ENCODE measurements at regions of chr12 and their contacts with region 1.

Region 1: GRCh38 chr12:20142956-20143355 is 225.4 kb upstream of the PDE3A start:
- DNase-seq: no peak
- ATAC-seq: peak; percentile 75
- H3K4me3 ChIP-seq: no peak overlapping the region
- H3K27ac ChIP-seq: no peak overlapping the region
- H3K4me1 ChIP-seq: 0 out of 2 replicates have a peak, but pooled peaks cover 2% of the 10 kb centered on the region
- H3K27me3 ChIP-seq: no peaks in the 10 kb centered on the region
- CTCF ChIP-seq: no peak; a peak in 1 of 6 replicates
- EP300 ChIP-seq: no peak
- POLR2A ChIP-seq: no peak
- RAD21 ChIP-seq: 0 out of 2 replicates have a peak, but pooled peaks have one; percentile 28

Region 2: GRCh38 chr12:20097626-20098025 is 45.3 kb before region 1 on chr12:
- CTCF ChIA-PET with region 1: interaction called, 3 read pairs
- POLR2A ChIA-PET with region 1: no interaction called
- RAD21 ChIA-PET with region 1: interaction called, 4 read pairs
- SMC1A ChIA-PET with region 1: interaction called, 3 read pairs
- in situ Hi-C with region 1: no loop called
- intact Hi-C with region 1: loop called (anchors 2 kb)
- DNase-seq: peak; percentile 28
- ATAC-seq: peak; percentile 81
- H3K4me3 ChIP-seq: no peak overlapping the region
- H3K27ac ChIP-seq: no peak overlapping the region
- H3K4me1 ChIP-seq: no peaks in the 10 kb centered on the region
- H3K27me3 ChIP-seq: no peaks in the 10 kb centered on the region
- CTCF ChIP-seq: no peak
- EP300 ChIP-seq: peak; percentile 84 to 91; a peak in 3 of 4 replicates
- POLR2A ChIP-seq: no peak
- RAD21 ChIP-seq: no peak

Region 3: DNA sequence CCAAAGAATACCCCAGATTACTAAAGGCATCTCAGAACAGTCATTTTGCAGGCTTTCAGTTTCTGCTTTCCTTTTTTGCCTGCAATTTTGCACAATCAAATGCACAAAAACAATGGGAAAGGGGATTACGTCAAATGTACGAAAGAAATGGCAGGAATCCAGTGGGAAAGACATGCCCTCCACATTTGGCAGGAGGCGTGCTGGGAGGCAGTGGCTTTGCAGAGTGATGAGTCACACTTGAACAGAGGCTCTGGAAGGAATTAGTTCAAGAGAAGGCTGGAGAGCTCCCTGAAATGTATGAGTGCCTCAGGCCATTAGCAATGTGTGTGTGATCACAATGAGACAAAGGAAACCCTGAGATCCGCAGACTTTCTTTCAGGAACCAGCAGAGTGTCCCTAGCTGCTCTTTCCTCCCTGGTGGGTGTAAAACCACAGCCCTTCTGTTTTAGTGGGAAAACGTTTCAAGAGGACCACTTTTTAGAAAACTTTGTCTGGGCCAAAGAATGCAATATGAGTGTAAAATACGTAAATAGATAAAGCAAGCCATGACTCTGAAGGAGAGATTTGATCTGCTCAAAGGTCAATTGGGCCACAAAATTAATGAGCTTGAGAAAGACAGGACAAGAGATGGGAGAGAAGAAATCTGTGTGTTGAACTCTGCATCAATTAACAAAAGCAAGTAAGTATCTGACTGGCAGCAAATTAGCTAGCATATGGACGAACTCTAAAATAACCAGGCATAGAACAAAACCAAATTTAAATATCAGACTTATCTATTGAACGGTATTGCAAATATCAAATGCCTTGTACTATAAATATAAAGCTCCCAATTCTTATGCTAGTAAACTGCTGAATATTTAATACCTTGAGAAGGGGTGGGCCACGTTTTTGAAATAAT is 70.0 kb after region 1 on chr12:
- CTCF ChIA-PET with region 1: no interaction called
- POLR2A ChIA-PET with region 1: no interaction called
- RAD21 ChIA-PET with region 1: no interaction called
- SMC1A ChIA-PET with region 1: interaction called, 6 read pairs
- in situ Hi-C with region 1: no loop called
- intact Hi-C with region 1: loop called (anchors 5 kb)
- DNase-seq: no peak
- ATAC-seq: peak; percentile 56
- H3K4me3 ChIP-seq: no peak overlapping the region
- H3K27ac ChIP-seq: no peak overlapping the region
- H3K4me1 ChIP-seq: no peaks in the 10 kb centered on the region
- H3K27me3 ChIP-seq: no peaks in the 10 kb centered on the region
- CTCF ChIP-seq: no peak
- EP300 ChIP-seq: no peak
- POLR2A ChIP-seq: no peak
- RAD21 ChIP-seq: no peak

Measured in GM12878 (cell line).